Heart right ventricle (tissue), 16 donors: ENCODE measurements at regions of chr2 and their contacts with region 1.

Region 1: GRCh38 chr2:232211743-232212686 is 166.5 kb upstream of the ALPP start:
- DNase-seq: no peak
- ATAC-seq: no peak
- H3K4me3 ChIP-seq: no peak overlapping the region
- H3K27ac ChIP-seq: no peak overlapping the region
- H3K4me1 ChIP-seq: peaks cover 0 to 12% (median 0%) of the 10 kb centered on the region in 9 donors
- H3K27me3 ChIP-seq: no peaks in the 10 kb centered on the region
- CTCF ChIP-seq: no peak

Region 2: DNA sequence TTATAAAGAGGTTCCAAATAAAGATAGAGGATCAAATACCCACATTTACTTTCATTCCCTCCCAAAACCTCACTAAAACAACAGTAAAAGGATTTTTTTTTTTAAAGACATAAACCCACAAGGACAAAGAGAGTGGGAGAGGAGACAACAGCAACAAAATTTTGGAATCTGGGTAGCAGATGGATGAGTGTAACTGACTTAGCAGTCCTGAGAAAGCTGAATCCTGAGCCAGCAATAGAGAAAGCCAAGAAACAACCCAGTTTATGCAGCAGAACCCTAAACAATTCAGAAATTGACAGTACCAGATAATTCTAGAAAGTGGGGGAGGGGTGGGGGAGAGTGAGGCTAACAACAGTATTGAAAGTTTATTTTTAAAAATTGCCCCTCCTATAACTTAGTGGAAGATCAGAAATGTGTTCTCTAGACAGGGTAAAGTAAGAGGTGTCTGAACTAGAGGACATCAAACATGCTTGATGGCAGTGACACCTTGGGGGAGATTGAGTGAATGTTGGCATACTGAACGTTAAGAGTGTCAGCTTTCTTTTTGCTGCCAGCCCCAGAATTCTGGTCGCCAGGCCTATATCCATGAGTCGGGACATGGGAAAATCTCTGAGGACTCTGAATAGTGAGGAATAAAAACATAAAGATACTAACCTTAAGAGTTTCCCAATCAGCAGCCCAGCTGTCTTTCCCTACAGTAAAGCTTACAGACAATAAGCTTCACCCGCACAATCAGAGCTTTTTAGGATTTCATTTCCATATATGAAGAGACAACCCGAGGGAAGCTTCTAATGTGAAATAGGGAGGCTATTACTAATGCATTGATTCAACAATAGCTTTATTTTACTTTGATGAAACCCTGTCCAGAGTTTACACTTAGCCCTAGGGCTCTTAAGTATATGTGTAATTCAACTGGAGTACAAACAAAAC is 38.5 kb after region 1 on chr2:
- intact Hi-C with region 1: no loop called
- DNase-seq: no peak
- ATAC-seq: no peak
- H3K4me3 ChIP-seq: no peak overlapping the region
- H3K27ac ChIP-seq: no peak overlapping the region
- H3K4me1 ChIP-seq: no peaks in the 10 kb centered on the region
- H3K27me3 ChIP-seq: no peaks in the 10 kb centered on the region
- CTCF ChIP-seq: no peak

Region 3: DNA sequence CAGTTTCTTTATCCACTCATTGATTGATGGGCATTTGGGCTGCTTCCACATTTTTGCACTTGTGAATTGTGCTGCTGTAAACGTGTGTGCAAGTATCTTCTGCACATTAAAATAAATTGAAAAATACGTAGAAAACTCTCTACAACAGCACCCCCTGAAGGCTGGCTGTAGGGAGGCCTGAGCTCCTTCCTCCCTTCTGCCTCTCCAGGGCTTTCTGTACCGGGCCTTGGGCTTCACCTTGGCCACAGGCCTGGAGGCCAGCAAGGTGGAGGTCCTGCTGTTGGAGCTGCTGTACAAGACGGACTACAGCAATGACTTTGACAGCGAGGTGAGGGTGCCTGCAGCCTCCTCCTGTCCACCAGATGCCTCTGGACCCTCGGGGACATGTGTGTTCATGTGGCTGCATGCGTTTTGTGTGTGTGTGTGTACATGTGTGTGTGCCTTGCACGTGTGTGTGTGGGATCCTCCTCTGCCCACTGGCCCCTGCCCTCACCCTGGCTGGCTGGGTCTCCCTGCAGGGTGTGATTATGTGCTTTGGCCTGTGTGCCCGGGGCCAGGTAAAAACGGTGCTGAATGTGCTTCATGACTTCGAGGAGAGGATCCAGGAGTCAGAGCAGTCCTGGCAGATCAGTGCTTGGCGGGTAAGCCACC is 1595.3 kb after region 1 on chr2:
- intact Hi-C with region 1: loop called in 1 of 10 experiments (anchors 5 kb)
- DNase-seq: no peak
- ATAC-seq: no peak
- H3K4me3 ChIP-seq: no peak overlapping the region
- H3K27ac ChIP-seq: no peak overlapping the region
- H3K4me1 ChIP-seq: no peaks in the 10 kb centered on the region
- H3K27me3 ChIP-seq: peaks cover 0 to 32% (median 14%) of the 10 kb centered on the region in 7 donors
- CTCF ChIP-seq: no peak